Panc1 (cell line): ENCODE measurements at regions of chr17 and their contacts with region 1.

Region 1: GRCh38 chr17:30906101-30906911 is at the start of gene TEFM:
- DNase-seq: peak; percentile 72
- ATAC-seq: peak; percentile 98
- H3K4me3 ChIP-seq: peak within 1 kb of the TSS; percentile 88 to 99
- H3K27ac ChIP-seq: peak within 1 kb of the TSS; percentile 95
- H3K4me1 ChIP-seq: no peaks in the 10 kb centered on the region
- H3K27me3 ChIP-seq: no peaks in the 10 kb centered on the region
- CTCF ChIP-seq: no peak
- total RNA-seq, gene TEFM: 13.0 TPM

Region 2: GRCh38 chr17:30894236-30894635 is 12.1 kb before region 1 on chr17:
- CTCF ChIA-PET with region 1: no interaction called
- POLR2A ChIA-PET with region 1: interaction called, 12 read pairs
- in situ Hi-C with region 1: no loop called
- intact Hi-C with region 1: no loop called
- DNase-seq: no peak
- ATAC-seq: no peak
- H3K4me3 ChIP-seq: no peak overlapping the region
- H3K27ac ChIP-seq: no peak overlapping the region
- H3K4me1 ChIP-seq: no peaks in the 10 kb centered on the region
- H3K27me3 ChIP-seq: no peaks in the 10 kb centered on the region
- CTCF ChIP-seq: no peak

Region 3: GRCh38 chr17:30970831-30971567 is 64.7 kb after region 1 on chr17 and contains the start of gene RNF135:
- CTCF ChIA-PET with region 1: no interaction called
- POLR2A ChIA-PET with region 1: interaction called, 5 read pairs
- in situ Hi-C with region 1: no loop called
- intact Hi-C with region 1: loop called (anchors 5 kb)
- DNase-seq: no peak
- ATAC-seq: peak; percentile 95
- H3K4me3 ChIP-seq: peak within 1 kb of the TSS; percentile 62 to 97
- H3K27ac ChIP-seq: peak within 1 kb of the TSS; percentile 96
- H3K4me1 ChIP-seq: peaks cover 14% of the 10 kb centered on the region; the same call in 1 of the 2 replicates
- H3K27me3 ChIP-seq: no peaks in the 10 kb centered on the region
- CTCF ChIP-seq: no peak
- total RNA-seq, gene RNF135: 41.8 TPM

Region 4: DNA sequence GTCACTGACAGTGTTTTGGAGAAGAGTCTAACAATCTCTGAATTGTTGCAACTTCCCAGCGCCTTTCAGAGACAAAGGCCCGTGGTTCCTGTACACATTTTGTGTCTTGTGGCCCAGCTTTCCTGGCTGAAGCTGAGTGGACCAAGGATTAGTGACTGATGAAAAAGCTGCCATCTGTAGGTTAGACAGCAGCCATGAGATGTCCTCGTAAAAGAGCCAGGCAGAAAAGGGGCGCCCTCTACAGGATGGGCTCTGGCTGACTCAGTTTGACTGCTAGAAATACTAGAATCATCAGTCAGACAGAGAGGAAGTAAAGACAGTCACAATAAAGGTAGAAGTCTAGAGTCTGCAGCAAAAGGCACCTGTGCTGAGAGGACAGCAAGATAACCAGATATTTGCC is 162.0 kb after region 1 on chr17:
- CTCF ChIA-PET with region 1: no interaction called
- POLR2A ChIA-PET with region 1: no interaction called
- in situ Hi-C with region 1: no loop called
- intact Hi-C with region 1: no loop called
- DNase-seq: no peak
- ATAC-seq: peak; percentile 33; the same call in 1 of the 2 replicates
- H3K4me3 ChIP-seq: no peak overlapping the region
- H3K27ac ChIP-seq: no peak overlapping the region
- H3K4me1 ChIP-seq: peaks cover 7% of the 10 kb centered on the region
- H3K27me3 ChIP-seq: no peaks in the 10 kb centered on the region
- CTCF ChIP-seq: peak; percentile 61

Region 5: DNA sequence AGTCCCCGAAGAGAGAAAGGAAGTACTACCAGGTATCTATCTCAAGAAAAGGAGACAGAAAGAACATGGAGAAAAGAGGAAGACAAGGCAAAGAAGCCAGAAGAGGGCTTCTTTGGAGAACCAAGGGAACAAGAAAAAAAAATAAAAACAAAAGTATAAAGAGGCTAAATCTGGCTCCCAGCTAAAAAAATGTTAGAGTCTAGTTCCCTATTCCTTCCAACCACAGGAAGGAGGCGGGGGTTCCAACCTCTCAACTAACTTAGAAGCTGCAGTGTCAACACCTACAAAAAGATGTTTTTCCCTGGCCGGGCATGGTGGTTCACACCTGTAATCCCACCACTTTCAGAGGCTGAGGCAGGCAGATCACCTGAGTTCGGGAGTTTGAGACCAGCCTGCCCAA is 981.8 kb after region 1 on chr17:
- CTCF ChIA-PET with region 1: no interaction called
- POLR2A ChIA-PET with region 1: no interaction called
- in situ Hi-C with region 1: no loop called
- intact Hi-C with region 1: no loop called
- DNase-seq: no peak
- ATAC-seq: no peak
- H3K4me3 ChIP-seq: no peak overlapping the region
- H3K27ac ChIP-seq: no peak overlapping the region
- H3K4me1 ChIP-seq: no peaks in the 10 kb centered on the region
- H3K27me3 ChIP-seq: no peaks in the 10 kb centered on the region
- CTCF ChIP-seq: no peak